ENCODE measurements at regions of chr5 and their contacts with region 1.

Region 1: DNA sequence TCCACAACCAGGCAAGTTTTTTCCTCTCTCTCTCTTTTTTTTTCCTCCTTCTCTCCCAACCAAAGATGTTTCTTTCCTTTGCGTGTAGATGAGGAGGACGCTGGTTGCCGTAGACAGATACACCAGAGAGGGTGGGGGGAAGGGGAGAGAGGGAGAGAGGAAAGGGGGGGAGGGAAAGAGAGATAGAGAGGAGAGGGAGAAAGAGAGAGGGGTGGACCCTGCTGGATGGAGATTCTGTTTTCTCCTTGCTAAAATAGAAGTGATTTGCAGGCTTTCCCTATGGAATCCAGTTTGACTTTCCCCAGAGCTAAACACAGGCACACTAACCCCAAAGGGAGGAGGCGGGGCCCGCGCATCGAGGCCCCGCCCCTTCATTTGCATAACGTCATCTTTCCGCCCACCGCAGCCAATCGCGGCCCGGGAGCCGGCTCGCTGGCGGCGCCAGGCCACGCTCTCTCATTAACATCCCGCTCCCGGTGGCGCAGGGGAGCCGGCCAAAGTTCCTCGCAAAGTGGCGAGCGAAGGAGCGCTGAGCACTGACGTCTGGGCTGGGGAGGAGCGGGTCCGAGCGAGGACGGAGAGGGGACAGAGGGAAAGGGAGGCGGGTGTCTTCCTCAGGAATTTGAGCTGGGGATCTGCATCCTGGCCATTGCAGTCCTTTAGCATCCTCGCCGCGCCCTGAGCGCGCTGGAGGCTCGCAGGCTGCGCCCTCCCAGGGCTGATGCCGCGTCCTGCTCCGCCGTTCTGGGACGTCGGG is 487 bp upstream of the EBF1 start:
- DNase-seq: peak; percentile 92
- ATAC-seq: peak; percentile 64
- H3K4me3 Mint-ChIP-seq: peak overlapping the region; percentile 99
- H3K27ac Mint-ChIP-seq: peak overlapping the region; percentile 95
- H3K4me1 Mint-ChIP-seq: peaks cover 69% of the 10 kb centered on the region
- H3K27me3 Mint-ChIP-seq: no peaks in the 10 kb centered on the region
- CTCF ChIP-seq: no peak

Region 2: DNA sequence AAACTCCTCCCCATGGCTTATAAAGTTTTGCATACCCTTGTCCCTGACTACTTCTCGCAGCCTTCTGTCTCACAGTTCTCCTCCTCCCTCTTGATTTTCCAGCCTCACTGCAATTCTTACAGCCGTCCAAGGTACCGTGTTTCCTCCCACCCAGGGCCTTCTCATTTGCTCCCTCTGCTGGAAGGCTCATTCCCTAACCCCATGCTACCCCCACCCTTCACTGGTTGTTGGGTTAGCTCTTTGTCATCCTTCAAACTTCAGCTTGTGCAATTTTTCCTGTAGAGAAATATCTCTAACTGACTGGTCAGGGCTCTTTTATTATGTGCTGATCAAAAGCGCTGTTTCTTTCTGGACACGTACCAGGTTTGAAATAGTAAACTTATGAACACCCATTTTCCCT is 329.7 kb before region 1 on chr5:
- CTCF ChIA-PET with region 1: no interaction called
- POLR2A ChIA-PET with region 1: interaction called, 18 read pairs
- intact Hi-C with region 1: loop called (anchors 2 kb)
- DNase-seq: no peak
- ATAC-seq: no peak
- H3K4me3 Mint-ChIP-seq: peak overlapping the region; percentile 16
- H3K27ac Mint-ChIP-seq: peak overlapping the region; percentile 59
- H3K4me1 Mint-ChIP-seq: peaks cover 91% of the 10 kb centered on the region
- H3K27me3 Mint-ChIP-seq: no peaks in the 10 kb centered on the region
- CTCF ChIP-seq: no peak

Region 3: DNA sequence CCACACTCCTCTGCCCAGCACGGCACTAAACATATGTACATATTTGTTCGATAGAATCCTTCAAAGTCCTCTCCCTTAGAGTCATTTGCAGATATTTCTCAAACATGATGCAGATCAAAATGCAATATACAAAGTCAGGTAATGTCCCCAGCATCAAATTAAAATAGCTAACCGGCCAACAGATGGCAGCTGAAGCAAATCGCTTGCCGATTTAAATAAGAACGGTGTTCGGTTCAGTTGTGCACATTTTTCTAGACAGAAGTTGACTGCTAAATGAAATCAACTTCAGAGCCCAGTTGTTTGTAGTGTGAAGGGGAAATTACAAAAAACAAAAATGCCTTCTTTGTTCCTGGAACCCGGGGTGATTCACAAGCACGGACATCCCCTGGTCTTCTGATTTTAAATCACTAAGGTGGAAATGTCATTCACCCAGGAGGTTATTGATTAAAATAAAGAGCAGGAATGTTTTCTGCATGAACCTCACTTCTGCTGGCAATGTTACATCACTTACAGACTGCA is 219.7 kb before region 1 on chr5:
- CTCF ChIA-PET with region 1: interaction called, 19 read pairs
- POLR2A ChIA-PET with region 1: interaction called, 63 read pairs
- intact Hi-C with region 1: loop called (anchors 1 kb)
- DNase-seq: no peak
- ATAC-seq: peak; percentile 28
- H3K4me3 Mint-ChIP-seq: peak overlapping the region; percentile 70
- H3K27ac Mint-ChIP-seq: peak overlapping the region; percentile 88
- H3K4me1 Mint-ChIP-seq: peaks cover 95% of the 10 kb centered on the region
- H3K27me3 Mint-ChIP-seq: no peaks in the 10 kb centered on the region
- CTCF ChIP-seq: no peak

Region 4: DNA sequence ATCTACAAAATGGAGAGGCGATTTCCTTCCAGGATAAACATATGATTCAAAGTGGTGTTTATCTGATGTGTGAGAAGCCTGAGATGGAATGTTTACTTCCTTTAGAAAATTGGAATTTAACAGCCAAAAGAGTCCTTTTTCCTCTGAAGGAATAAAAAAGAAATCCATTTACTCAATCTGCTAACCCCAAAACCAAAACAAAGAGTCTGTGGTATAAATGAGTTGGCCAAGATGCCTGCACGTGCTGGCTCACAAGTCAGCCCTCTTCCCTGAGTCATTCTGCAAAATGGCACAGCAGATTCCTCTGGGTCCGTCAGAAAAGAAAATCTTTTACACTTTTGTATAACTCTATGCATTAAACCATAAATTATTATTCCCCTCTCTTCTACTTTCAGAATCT is 61.3 kb before region 1 on chr5:
- CTCF ChIA-PET with region 1: no interaction called
- POLR2A ChIA-PET with region 1: interaction called, 17 read pairs
- intact Hi-C with region 1: no loop called
- DNase-seq: no peak
- ATAC-seq: no peak
- H3K4me3 Mint-ChIP-seq: no peak overlapping the region
- H3K27ac Mint-ChIP-seq: peak overlapping the region; percentile 75
- H3K4me1 Mint-ChIP-seq: peaks cover 78% of the 10 kb centered on the region
- H3K27me3 Mint-ChIP-seq: no peaks in the 10 kb centered on the region
- CTCF ChIP-seq: no peak

Region 5: GRCh38 chr5:159083548-159084452 is 16.4 kb before region 1 on chr5:
- CTCF ChIA-PET with region 1: no interaction called
- POLR2A ChIA-PET with region 1: interaction called, 150 read pairs
- intact Hi-C with region 1: loop called (anchors 1 kb)
- DNase-seq: no peak
- ATAC-seq: peak; percentile 93
- H3K4me3 Mint-ChIP-seq: peak overlapping the region; percentile 72
- H3K27ac Mint-ChIP-seq: peak overlapping the region; percentile 93
- H3K4me1 Mint-ChIP-seq: peaks cover 70% of the 10 kb centered on the region
- H3K27me3 Mint-ChIP-seq: no peaks in the 10 kb centered on the region
- CTCF ChIP-seq: no peak